Activated naive CD4-positive, alpha-beta T cell treated with anti-CD3 and anti-CD28 coated beads for 36 hours (primary cell): ENCODE measurements at regions of chr1 and their contacts with region 1.

Region 1: DNA sequence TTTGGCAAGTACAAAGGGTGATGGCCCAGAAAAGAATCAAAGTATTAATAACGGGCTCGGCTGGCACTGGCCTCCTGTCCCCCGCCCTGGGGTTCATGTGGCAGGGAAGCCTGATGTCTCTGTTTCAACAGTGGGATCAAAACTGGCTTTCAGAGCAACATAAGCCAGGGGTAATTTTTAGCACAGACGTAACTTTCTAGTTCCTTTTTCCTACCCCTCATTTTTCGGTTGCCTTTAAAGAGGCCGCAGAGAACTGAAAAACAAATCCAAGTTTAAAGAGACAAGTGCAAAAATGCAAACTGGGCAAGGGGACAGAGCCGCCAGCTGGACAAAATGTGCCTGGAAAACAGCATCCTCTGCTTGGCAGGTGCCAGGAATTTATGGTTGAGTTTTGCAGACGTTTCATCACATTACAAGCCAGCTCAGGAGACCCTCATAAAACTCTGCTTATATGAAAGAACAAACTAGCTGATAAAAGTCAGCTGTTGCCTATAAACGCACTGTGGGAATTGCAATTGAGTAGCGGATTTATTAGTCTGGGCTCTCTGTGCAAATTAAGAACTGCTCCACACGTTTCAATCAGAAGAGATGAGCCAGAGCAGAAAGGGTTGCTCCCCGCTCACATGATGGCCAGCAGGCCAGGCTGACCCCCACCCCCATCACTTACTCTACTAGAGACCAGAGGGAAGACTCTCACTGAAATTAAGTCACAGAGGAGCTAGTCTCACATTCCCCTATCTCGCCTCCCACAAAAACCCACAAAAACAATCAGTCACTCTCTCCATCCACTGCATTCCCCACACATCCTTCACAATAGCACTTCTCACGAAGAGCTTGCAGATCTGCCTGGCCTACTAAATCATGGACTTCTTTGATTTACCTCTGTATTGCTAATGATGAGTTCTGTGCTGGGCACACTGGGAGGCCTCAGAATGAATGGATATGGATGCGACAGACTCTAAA is 15.8 kb upstream of the CDCA8 start:
- DNase-seq: no peak
- H3K4me3 Mint-ChIP-seq: no peak overlapping the region
- H3K27ac Mint-ChIP-seq: no peak overlapping the region
- H3K4me1 Mint-ChIP-seq: peaks cover 20% of the 10 kb centered on the region
- H3K27me3 Mint-ChIP-seq: no peaks in the 10 kb centered on the region

Region 2: DNA sequence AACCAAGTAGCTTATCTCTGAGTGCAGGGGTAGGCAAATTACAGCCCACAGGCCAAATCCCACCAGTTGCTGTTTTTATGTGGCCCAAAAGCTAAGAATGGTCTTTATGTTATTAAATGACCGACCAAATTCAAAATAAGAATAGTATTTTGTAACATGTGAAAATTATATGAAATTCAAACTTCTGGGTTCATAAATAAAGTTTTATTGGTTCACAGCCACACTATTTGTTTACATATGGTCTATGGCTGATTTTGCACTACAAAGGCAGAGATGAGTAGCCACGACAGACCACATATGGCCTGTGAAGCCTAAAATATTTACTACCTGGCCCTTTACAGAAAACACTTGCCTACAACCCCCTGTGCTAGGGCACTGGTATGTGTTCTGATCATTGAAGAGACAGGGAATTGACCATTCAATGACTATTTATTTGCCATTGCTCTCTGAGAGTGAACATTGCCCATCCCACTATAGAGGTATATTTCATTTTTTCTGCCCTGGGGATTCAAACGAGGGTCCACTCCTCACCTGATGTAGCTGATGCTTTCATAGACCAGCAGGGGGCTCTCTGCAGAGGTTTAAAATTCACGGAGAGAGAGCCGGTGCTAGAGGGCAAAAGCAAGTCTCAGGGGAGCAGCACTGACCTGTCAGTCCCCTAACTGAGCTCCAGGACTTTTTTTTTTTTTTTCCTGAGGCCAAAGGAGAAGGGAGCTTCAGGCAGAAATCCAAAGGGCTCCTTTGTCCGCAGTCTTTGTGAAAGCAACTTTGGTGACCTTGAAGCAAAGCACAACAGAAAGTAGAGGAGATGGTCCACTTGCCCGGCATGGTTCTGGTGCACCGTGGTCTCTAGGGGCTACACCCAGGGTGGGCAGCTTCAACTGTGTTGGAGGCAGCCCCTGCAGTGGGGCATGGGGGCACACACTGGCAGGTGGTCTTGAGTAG is 73.5 kb before region 1 on chr1:
- CTCF ChIA-PET with region 1: interaction called, 85 read pairs
- intact Hi-C with region 1: no loop called
- DNase-seq: peak; percentile 50
- H3K4me3 Mint-ChIP-seq: no peak overlapping the region
- H3K27ac Mint-ChIP-seq: no peak overlapping the region
- H3K4me1 Mint-ChIP-seq: no peaks in the 10 kb centered on the region
- H3K27me3 Mint-ChIP-seq: no peaks in the 10 kb centered on the region